ENCODE measurements at regions of chr22 and their contacts with region 1.

Region 1: DNA sequence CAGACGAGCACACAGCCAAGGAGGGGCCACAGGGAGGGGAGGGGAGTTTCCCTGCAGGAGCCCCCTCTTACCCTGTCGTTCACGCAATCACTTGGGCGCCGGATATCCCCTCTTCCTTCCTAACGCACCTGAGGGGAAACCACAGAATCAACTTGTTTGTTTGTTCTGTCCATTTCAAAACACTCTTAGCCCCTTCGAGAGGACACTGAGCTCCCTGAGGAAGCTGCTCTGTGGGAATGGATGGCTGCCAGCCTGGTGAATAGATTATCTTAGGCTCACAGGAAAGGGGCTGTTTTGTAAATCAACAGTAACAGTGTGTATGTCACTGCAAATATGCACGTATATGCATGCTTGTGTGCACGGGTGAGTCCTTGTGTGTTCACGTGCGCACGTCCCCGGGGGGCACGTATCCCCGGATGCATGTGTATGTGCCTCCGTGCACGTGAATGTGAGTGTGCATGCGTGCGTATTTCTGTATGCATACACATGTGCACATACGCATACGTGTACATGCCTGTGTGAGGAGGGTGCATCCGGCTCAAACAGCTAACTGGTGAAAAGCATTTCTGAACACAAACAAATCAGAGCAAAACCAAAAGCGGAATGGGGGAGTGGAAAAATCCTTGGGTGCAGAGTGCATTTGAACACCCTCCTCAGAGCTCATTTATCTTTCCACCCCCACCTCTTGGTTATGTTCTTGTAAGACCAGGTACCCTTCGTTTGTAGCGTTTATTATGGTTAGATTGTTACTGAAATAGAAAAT is 7.2 kb downstream of the ARSA start:
- DNase-seq: peak; percentile 85
- CTCF ChIP-seq: peak; percentile 77

Region 2: DNA sequence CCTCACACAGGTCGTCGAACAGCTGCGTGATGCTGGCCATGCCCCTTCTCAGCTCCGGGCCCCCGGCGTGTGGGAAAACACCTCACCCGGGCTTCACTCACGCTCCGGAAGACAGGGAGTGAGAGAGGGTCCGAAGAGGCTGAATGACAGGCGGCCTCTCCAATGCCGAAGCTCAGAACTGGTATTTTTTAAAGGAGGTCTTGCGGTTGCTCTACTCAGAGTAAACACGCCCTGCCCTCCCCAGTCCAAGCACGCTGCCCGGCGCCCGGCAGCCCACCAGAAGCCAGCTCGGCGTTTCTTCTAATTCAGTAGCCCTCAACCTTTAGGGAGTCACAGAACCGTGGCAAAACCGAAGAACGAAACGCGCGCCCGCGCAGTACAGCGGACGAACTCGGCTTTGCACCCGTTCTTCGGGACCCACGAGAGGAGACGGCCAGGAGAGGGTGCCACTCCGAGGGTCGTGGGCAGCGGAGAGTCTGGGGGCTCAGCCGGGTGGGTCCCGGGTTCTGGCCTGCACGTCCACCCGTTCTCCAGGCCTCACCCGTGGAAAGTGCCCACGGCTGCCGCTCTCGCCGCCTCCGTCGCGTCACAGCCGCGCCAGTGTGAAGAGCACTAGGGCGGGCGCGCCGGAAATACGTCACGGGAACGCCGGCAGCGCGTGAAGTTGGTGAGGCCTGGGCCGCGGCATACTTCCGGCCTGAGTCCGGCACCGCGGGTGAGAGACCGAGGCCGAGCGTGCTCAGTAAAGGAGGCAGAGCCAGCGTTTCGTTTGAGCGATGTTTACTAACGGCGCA is 376.2 kb before region 1 on chr22 and contains the start of gene TUBGCP6:
- CTCF ChIA-PET with region 1: interaction called, 13 read pairs
- POLR2A ChIA-PET with region 1: no interaction called
- DNase-seq: peak; percentile 94
- CTCF ChIP-seq: no peak

Region 3: GRCh38 chr22:50276143-50276542 is 344.6 kb before region 1 on chr22:
- CTCF ChIA-PET with region 1: interaction called, 16 read pairs
- POLR2A ChIA-PET with region 1: no interaction called
- DNase-seq: peak; percentile 65
- CTCF ChIP-seq: peak; percentile 68

Region 4: GRCh38 chr22:50507991-50508884 is 112.5 kb before region 1 on chr22 and contains the start of gene NCAPH2:
- CTCF ChIA-PET with region 1: interaction called, 15 read pairs
- POLR2A ChIA-PET with region 1: interaction called, 8 read pairs
- DNase-seq: peak; percentile 100
- CTCF ChIP-seq: no peak

Region 5: GRCh38 chr22:50544078-50544745 is 76.6 kb before region 1 on chr22:
- CTCF ChIA-PET with region 1: interaction called, 10 read pairs
- POLR2A ChIA-PET with region 1: interaction called, 5 read pairs
- DNase-seq: peak; percentile 78
- CTCF ChIP-seq: peak; percentile 73

Region 6: GRCh38 chr22:50606165-50606945 is 14.4 kb before region 1 on chr22:
- CTCF ChIA-PET with region 1: interaction called, 25 read pairs
- POLR2A ChIA-PET with region 1: no interaction called
- DNase-seq: peak; percentile 37
- CTCF ChIP-seq: peak; percentile 19

Measured in GM10248 (cell line).